ENCODE measurements at regions of chr20 and their contacts with region 1.

Region 1: GRCh38 chr20:51372176-51372803 is 170.2 kb downstream of the NFATC2 start:
- DNase-seq: peak; percentile 73 to 91
- ATAC-seq: peak; percentile 97 to 98
- H3K4me3 ChIP-seq: no peak overlapping the region
- H3K27ac ChIP-seq: peak overlapping the region; percentile 34 to 74
- H3K4me1 ChIP-seq: peaks cover 16% of the 10 kb centered on the region
- CTCF ChIP-seq: peak; percentile 88
- EP300 ChIP-seq: no peak
- POLR2A ChIP-seq: no peak
- RAD21 ChIP-seq: peak; percentile 95 to 97

Region 2: GRCh38 chr20:51616060-51616459 is 243.8 kb after region 1 on chr20:
- CTCF ChIA-PET with region 1: interaction called, 16 read pairs
- POLR2A ChIA-PET with region 1: no interaction called
- DNase-seq: peak in 1 of 2 experiments; percentile 28
- ATAC-seq: peak; percentile 66 to 77; a peak in 4 of 6 replicates
- H3K4me3 ChIP-seq: no peak overlapping the region
- H3K27ac ChIP-seq: no peak overlapping the region
- H3K4me1 ChIP-seq: no peaks in the 10 kb centered on the region
- CTCF ChIP-seq: 0 out of 3 replicates have a peak, but pooled peaks have one; percentile 11
- EP300 ChIP-seq: no peak
- POLR2A ChIP-seq: no peak
- RAD21 ChIP-seq: peak in 1 of 2 experiments; percentile 49; a peak in 2 of 5 replicates

Region 3: GRCh38 chr20:51624157-51624731 is 252.0 kb after region 1 on chr20:
- CTCF ChIA-PET with region 1: interaction called, 34 read pairs
- POLR2A ChIA-PET with region 1: no interaction called
- DNase-seq: peak; percentile 75
- ATAC-seq: peak; percentile 76 to 92; a peak in 5 of 6 replicates
- H3K4me3 ChIP-seq: no peak overlapping the region
- H3K27ac ChIP-seq: peak overlapping the region in 1 of 2 experiments; percentile 58; a peak in 4 of 6 replicates
- H3K4me1 ChIP-seq: no peaks in the 10 kb centered on the region
- CTCF ChIP-seq: peak; percentile 78
- EP300 ChIP-seq: no peak
- POLR2A ChIP-seq: no peak
- RAD21 ChIP-seq: peak; percentile 68 to 79

Measured in A549 (cell line).